ENCODE measurements at regions of chr9 and their contacts with region 1.

Region 1: GRCh38 chr9:127955294-127956035 is 17.8 kb upstream of the DPM2 start:
- DNase-seq: peak; percentile 80
- H3K4me3 Mint-ChIP-seq: peak overlapping the region; percentile 30
- H3K27ac Mint-ChIP-seq: peak overlapping the region; percentile 68
- H3K4me1 Mint-ChIP-seq: peaks cover 85% of the 10 kb centered on the region
- H3K27me3 Mint-ChIP-seq: no peaks in the 10 kb centered on the region

Region 2: GRCh38 chr9:127805620-127806019 is 149.8 kb before region 1 on chr9:
- CTCF ChIA-PET with region 1: no interaction called
- POLR2A ChIA-PET with region 1: no interaction called
- DNase-seq: peak; percentile 35
- H3K4me3 Mint-ChIP-seq: no peak overlapping the region
- H3K27ac Mint-ChIP-seq: no peak overlapping the region
- H3K4me1 Mint-ChIP-seq: peaks cover 36% of the 10 kb centered on the region
- H3K27me3 Mint-ChIP-seq: no peaks in the 10 kb centered on the region

Region 3: DNA sequence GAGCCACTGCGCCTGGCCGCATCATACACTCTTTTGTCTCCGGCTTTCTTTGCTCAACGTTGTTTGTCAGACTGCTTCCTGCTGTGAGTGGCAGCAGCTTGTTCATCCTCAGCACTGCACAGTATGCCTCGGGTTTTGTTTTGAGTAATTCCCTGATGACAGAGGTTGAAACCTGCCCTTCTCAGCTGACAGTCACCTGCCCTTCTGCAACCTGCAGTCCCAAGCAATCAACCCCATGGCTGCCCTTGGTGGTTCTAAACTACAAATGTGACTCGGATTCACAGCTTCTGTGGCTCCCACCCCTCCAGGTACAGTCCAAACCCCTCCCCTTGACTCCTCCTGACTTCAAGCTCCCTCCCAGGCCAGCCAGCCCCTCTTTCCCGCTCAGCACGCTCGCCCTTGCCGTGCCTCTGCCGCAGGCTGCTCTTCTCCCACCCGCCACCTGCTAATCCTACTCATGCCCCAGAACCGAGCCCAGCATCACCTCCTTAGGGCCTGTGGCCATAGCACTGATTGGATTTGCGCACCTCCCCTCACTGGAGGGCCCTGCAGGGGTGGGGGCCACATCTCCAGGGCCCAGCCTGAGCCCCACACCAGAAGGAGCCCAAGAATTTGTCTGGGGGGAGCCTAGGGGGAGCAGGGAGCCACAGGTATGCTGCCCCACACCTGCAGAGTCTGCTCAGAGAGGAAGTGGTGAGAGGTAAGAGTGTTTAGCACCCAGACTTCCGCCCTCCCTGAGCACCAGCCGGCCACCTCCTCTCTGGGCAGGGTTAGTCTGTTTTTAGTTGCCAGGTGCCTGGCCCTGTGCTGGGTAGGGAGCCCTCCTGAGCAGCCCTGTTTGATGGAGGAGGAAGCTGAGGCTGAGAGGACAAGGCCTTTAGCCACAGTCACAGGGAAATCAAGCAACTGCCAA is 15.2 kb after region 1 on chr9:
- CTCF ChIA-PET with region 1: interaction called, 63 read pairs
- POLR2A ChIA-PET with region 1: no interaction called
- DNase-seq: peak; percentile 83
- H3K4me3 Mint-ChIP-seq: peak overlapping the region; percentile 98
- H3K27ac Mint-ChIP-seq: peak overlapping the region; percentile 94
- H3K4me1 Mint-ChIP-seq: peaks cover 94% of the 10 kb centered on the region
- H3K27me3 Mint-ChIP-seq: no peaks in the 10 kb centered on the region

Region 4: GRCh38 chr9:127979333-127980110 is 24.1 kb after region 1 on chr9:
- CTCF ChIA-PET with region 1: interaction called, 63 read pairs
- POLR2A ChIA-PET with region 1: interaction called, 3 read pairs
- DNase-seq: no peak
- H3K4me3 Mint-ChIP-seq: peak overlapping the region; percentile 98
- H3K27ac Mint-ChIP-seq: peak overlapping the region; percentile 90
- H3K4me1 Mint-ChIP-seq: peaks cover 48% of the 10 kb centered on the region
- H3K27me3 Mint-ChIP-seq: no peaks in the 10 kb centered on the region

Region 5: GRCh38 chr9:128034821-128035764 is 79.6 kb after region 1 on chr9:
- CTCF ChIA-PET with region 1: interaction called, 56 read pairs
- POLR2A ChIA-PET with region 1: no interaction called
- DNase-seq: peak; percentile 81
- H3K4me3 Mint-ChIP-seq: no peak overlapping the region
- H3K27ac Mint-ChIP-seq: peak overlapping the region; percentile 36
- H3K4me1 Mint-ChIP-seq: peaks cover 42% of the 10 kb centered on the region
- H3K27me3 Mint-ChIP-seq: no peaks in the 10 kb centered on the region

Measured in activated CD4-positive, alpha-beta T cell treated with anti-CD3 and anti-CD28 coated beads, Interleukin-2, amount 10 ng/mL, durations not matched to agents 7 days and 5 days (primary cell).